Ovary (tissue), 10 donors: ENCODE measurements at regions of chr6 and their contacts with region 1.

Region 1: GRCh38 chr6:162951164-162951743 is 223.5 kb downstream of the PACRG start:
- DNase-seq: no peak
- H3K4me3 ChIP-seq: no peak overlapping the region
- H3K27ac ChIP-seq: no peak overlapping the region
- H3K4me1 ChIP-seq: no peaks in the 10 kb centered on the region
- H3K27me3 ChIP-seq: no peaks in the 10 kb centered on the region
- CTCF ChIP-seq: no peak
- EP300 ChIP-seq: no peak
- POLR2A ChIP-seq: no peak

Region 2: GRCh38 chr6:162198925-162199324 is 752.3 kb before region 1 on chr6:
- intact Hi-C with region 1: no loop called
- DNase-seq: no peak
- H3K4me3 ChIP-seq: no peak overlapping the region
- H3K27ac ChIP-seq: no peak overlapping the region
- H3K4me1 ChIP-seq: peaks cover 3% of the 10 kb centered on the region
- H3K27me3 ChIP-seq: no peaks in the 10 kb centered on the region
- CTCF ChIP-seq: no peak
- EP300 ChIP-seq: no peak
- POLR2A ChIP-seq: no peak

Region 3: DNA sequence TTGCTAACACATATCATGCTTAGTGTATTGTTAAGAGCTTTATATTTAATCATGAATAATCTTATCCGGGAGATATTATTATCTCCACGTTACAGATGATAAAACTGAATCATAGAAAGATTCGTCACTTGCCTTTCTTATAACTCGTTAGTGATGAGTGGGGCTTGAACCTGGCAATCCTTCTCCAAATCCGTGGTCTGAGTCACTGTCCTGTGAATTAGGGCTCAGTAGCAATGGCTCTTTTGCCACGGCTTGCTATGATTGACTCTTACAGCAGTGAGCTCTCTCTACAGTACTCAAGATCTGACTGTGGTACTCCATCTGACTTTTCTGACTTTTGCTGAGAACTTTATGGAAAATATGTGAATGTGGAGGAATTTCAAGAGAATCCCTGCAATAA is 23.4 kb after region 1 on chr6:
- intact Hi-C with region 1: no loop called
- DNase-seq: no peak
- H3K4me3 ChIP-seq: no peak overlapping the region
- H3K27ac ChIP-seq: no peak overlapping the region
- H3K4me1 ChIP-seq: no peaks in the 10 kb centered on the region
- H3K27me3 ChIP-seq: no peaks in the 10 kb centered on the region
- CTCF ChIP-seq: no peak
- EP300 ChIP-seq: no peak
- POLR2A ChIP-seq: no peak

Region 4: DNA sequence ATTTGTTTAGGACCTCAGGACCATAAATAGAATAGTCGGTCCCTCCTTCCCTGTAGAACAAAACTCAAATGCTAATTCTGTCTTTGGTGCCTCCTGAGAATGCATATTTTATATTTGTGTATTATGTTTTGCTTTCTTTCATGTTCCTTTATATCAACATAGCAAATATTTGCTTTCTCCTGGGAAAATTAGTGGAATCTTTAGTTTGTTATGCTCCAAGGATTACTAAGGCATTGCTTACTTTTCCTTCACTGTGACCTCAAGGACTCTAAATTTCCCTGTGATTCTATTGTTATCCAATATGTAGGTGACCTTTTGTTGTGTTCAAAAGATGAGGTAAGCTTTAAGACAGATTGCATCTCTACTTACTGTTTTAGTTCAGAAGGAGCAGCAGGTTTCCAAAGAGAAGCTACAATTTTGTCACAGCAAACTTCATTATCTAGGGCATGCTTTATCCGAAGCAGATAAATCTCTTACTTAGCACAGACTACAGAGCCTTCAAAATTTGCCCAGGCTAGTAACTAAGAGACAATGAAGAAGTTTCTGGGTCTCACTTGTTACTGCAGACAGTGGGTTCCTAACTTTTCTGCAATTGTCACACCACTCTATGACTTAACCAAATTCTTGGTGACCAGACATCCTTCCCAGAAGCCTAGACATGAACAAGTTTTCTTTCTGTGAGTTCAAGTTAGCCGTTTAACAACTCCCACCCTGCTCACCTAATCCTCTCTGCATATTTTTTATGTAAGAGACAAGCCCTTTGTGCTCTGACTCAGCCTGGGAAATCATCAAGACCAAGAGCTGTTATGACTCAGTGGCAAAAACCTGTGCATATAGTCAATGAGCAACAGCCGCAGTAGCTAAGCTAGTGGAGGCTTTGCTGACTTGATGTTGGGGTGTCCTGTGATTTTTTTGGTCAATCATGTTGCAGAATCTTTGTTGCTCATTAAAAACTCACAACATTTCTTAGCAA is 842.0 kb after region 1 on chr6:
- intact Hi-C with region 1: loop called in 1 of 4 experiments (anchors 10 kb)
- DNase-seq: no peak
- H3K4me3 ChIP-seq: no peak overlapping the region
- H3K27ac ChIP-seq: no peak overlapping the region
- H3K4me1 ChIP-seq: no peaks in the 10 kb centered on the region
- H3K27me3 ChIP-seq: no peaks in the 10 kb centered on the region
- CTCF ChIP-seq: no peak
- EP300 ChIP-seq: no peak
- POLR2A ChIP-seq: no peak